GM10248 (cell line): ENCODE measurements at regions of chr11 and their contacts with region 1.

Region 1: DNA sequence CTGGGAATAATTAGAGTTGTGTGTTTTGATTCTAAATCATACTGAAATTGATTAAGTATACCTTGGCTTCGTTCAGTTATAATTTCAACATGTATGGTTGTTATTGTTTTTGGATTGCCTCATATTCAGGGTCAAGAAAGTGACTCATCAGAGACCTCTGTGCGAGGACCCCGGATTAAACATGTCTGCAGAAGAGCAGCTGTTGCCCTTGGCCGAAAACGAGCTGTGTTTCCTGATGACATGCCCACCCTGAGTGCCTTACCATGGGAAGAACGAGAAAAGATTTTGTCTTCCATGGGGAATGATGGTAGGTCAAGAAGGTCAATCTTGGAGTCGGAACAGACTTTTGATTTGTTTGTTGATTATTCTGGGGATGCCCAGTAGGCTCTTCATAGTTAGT is 40.4 kb downstream of the KMT2A start:
- DNase-seq: no peak
- CTCF ChIP-seq: no peak

Region 2: GRCh38 chr11:118263695-118264567 is 212.7 kb before region 1 on chr11 and contains the start of gene MPZL2:
- CTCF ChIA-PET with region 1: no interaction called
- POLR2A ChIA-PET with region 1: no interaction called
- DNase-seq: no peak
- CTCF ChIP-seq: no peak

Region 3: GRCh38 chr11:118488480-118489109 is 11.9 kb after region 1 on chr11:
- CTCF ChIA-PET with region 1: interaction called, 13 read pairs
- POLR2A ChIA-PET with region 1: no interaction called
- DNase-seq: peak; percentile 81
- CTCF ChIP-seq: peak; percentile 78

Region 4: DNA sequence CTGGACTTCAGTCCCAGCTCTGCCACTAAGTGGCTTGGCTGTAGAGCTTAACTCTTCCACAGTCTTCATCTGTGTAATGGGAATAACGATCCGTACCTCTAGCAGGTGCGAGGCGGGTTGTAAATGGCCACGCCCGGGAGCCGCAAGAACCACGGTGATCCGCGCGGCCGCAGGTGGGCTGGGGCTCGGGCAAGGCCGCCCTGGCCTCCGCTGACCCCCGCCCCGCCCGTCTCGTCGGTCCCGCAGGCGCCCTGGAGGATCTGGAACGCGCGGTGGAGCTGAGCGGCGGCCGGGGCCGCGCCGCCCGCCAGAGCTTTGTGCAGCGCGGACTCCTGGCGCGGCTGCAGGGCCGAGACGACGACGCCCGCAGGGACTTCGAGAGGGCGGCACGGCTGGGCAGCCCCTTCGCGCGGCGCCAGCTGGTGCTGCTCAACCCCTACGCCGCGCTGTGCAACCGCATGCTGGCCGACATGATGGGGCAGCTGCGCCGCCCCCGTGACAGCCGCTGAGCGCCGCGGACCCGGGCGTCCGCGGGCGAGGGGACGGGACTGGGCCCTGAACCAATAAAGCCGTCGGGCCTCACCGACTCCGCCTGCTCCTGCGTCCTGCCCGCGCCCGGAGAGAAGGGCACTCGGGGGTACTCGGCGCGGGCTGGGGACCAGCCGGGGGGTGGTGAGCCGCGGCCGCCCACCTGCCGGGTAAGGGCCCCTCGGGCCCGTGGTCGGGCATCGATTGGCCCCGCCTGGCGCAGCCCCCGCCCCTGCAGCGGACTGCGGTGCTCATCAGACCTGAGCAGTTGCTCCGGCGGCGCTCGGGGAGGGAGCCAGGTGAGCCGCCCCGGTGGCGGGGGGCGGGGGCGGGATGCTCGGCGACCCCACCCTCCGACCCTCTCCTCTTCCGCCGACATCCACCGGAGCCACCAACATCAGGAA is 54.0 kb after region 1 on chr11 and contains the start of gene TMEM25:
- CTCF ChIA-PET with region 1: no interaction called
- POLR2A ChIA-PET with region 1: no interaction called
- DNase-seq: peak; percentile 93
- CTCF ChIP-seq: no peak